Activated CD4-positive, alpha-beta memory T cell treated with anti-CD3 and anti-CD28 coated beads, Interleukin-2, amount 10 ng/mL, durations not matched to agents 7 days and 5 days (primary cell): ENCODE measurements at regions of chr10 and their contacts with region 1.

Region 1: GRCh38 chr10:43138021-43138756 is at the start of gene CSGALNACT2:
- DNase-seq: peak; percentile 92
- H3K4me3 Mint-ChIP-seq: peak within 1 kb of the TSS; percentile 94
- H3K27ac Mint-ChIP-seq: peak within 1 kb of the TSS; percentile 99
- H3K4me1 Mint-ChIP-seq: peaks cover 71% of the 10 kb centered on the region
- H3K27me3 Mint-ChIP-seq: no peaks in the 10 kb centered on the region
- total RNA-seq, gene CSGALNACT2: 64.8 to 66.2 TPM

Region 2: DNA sequence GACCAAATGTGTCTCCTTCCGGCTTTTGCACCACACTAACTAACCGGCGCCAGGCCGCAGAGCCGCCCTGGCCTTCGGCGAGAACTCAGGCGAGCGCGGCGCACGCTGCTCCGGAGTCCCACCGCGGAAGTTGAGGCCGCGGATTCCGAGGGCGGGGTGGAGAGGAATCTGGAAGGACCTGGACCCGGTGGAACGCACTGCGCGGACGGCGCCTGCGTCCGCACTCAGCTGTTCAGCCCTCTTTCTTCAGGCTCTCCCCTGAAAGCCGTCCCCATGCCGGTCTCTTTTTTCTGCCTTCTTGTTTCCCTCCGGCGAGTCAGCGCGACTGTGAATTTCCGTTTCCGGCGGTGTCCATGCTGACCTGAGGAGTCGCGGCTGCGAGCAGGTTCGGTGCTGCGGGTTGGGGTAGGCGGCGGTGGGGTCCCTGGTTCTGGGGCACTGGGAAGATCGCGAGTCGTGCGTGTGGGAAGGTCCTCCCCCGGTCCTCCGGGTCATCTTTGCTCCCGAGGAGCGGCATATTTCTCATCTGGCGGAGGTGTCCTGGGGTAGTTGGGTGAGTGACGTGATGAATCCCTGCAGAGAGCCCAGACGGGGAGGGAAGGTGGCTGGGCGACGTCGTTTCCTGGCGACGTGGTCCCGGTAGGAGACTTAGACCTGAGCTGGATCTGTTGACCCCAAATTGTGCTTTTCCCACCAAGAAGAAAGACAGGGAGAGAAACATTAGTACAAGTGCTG is 355.6 kb before region 1 on chr10 and contains the start of gene BMS1:
- CTCF ChIA-PET with region 1: no interaction called
- POLR2A ChIA-PET with region 1: interaction called, 20 read pairs
- DNase-seq: peak; percentile 91
- H3K4me3 Mint-ChIP-seq: peak within 1 kb of the TSS; percentile 88
- H3K27ac Mint-ChIP-seq: peak within 1 kb of the TSS; percentile 84
- H3K4me1 Mint-ChIP-seq: peaks cover 21% of the 10 kb centered on the region
- H3K27me3 Mint-ChIP-seq: peaks cover 3% of the 10 kb centered on the region
- total RNA-seq, gene BMS1: 14.3 to 14.6 TPM

Region 3: GRCh38 chr10:43120929-43121314 is 17.3 kb before region 1 on chr10:
- CTCF ChIA-PET with region 1: interaction called, 43 read pairs
- POLR2A ChIA-PET with region 1: interaction called, 415 read pairs
- DNase-seq: peak; percentile 87
- H3K4me3 Mint-ChIP-seq: peak overlapping the region; percentile 37
- H3K27ac Mint-ChIP-seq: peak overlapping the region; percentile 88
- H3K4me1 Mint-ChIP-seq: peaks cover 58% of the 10 kb centered on the region
- H3K27me3 Mint-ChIP-seq: no peaks in the 10 kb centered on the region

Region 4: DNA sequence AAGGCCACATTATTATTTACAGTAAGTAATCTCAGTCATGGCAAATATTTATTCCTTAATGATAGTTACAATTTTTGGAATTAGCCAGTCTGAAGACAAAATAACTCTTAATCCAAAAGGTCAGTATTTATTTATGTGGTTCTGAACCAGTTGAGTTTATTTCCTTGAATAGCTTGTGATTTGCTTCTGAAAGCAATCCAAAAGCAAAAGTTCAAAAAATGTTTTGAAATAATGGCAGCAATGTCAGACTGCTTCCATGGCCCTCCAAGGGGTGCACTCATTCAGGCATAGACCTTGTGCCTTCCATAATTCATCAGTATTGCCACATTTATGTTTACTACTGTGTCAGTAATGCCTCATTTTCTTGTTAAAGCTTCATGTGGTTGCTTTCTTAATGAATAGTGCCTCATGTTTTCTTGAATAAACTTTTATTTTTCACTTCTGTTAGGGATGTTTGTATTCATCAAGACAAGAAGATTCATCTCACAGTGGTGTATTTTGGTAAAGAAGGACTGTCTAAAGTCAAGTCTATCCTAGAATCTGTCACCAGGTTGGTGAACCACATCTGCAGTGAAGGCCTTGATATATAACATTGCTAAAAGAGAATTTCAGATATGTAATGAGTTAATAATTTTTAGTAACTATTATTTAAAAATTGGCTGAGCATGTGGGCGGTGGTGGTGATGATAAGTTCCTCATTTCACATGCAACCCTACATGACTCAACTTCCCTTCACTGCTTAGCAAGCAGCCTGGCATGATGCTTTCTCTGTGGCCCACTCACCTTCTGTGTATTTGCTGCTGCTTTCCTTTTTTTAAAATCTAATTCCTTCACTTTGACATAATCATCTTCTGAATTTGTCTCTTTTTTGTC is 22.1 kb after region 1 on chr10:
- CTCF ChIA-PET with region 1: interaction called, 3 read pairs
- POLR2A ChIA-PET with region 1: interaction called, 14 read pairs
- DNase-seq: no peak
- H3K4me3 Mint-ChIP-seq: no peak overlapping the region
- H3K27ac Mint-ChIP-seq: peak overlapping the region; percentile 49
- H3K4me1 Mint-ChIP-seq: peaks cover 65% of the 10 kb centered on the region
- H3K27me3 Mint-ChIP-seq: no peaks in the 10 kb centered on the region

Region 5: DNA sequence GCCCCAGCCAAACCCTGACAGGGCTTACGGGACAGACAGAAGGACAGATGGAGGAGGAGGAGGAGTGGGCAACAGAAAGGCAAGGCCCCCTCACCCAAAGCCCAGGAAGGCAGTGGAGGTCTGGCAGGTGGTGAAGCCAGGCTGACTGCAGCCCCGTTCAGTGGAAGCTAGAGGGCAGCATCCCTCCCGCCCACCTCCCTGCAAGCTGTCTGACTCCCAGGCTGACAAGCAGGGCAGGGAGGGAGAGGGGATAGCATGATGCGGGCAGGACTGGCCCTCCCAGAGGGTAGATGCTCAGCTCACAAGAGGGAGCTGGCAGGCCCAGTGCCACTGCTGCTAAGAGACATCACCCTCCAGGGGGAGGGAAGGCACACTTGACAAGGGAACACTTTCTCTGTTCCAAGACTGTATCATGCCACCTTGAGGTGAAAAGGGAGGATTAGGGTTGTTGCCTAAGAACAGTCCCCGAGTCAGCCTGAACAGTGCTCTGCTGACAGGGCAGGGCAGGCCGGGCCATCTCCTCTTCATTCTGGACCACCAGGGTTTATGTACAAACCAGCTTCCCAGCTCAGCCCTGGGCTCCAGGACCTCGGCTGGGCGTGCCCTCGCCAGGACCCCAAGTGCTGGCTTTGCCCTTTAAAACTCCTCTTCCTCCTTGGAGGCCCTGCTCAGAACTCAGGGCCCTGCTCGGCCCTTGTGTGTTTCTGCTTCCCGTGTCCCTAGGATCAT is 66.9 kb after region 1 on chr10:
- CTCF ChIA-PET with region 1: interaction called, 17 read pairs
- POLR2A ChIA-PET with region 1: interaction called, 13 read pairs
- DNase-seq: peak; percentile 73
- H3K4me3 Mint-ChIP-seq: no peak overlapping the region
- H3K27ac Mint-ChIP-seq: no peak overlapping the region
- H3K4me1 Mint-ChIP-seq: peaks cover 12% of the 10 kb centered on the region
- H3K27me3 Mint-ChIP-seq: no peaks in the 10 kb centered on the region

Region 6: DNA sequence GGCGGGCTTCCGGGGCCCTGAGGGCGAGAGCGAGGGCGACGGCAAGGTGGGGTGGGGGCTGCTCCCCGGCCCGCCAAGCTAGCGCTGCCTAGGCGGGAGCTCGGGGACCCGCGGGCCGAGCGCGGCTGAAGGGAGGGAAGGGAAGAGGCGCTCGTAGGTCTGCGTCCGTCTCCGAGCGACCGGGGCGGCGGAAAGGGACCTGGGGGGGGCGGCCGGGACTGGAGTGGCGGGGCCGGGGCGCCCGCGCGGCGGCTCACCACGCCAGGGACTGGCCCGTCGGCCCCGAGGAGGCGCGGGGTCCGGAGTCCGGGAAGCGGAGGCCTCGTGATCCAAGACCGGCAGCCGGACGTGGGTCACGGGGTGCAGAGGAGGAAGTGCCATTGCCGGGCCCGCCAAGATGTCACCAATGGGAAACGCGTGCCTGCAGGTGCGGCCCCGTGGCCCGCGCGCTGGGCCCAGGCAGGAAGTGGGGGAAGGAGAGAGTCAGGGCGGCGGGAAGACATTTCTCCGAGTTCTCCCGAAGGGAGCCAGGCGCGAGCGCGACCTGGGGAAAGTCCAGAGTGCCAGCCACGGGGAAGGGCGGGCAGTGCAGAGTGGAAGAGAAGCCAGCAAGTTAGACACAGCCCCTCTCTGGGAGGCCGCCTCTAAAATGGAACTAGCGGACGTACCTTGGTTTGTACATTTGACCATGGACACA is 258.9 kb after region 1 on chr10:
- CTCF ChIA-PET with region 1: no interaction called
- POLR2A ChIA-PET with region 1: interaction called, 51 read pairs
- DNase-seq: peak; percentile 89
- H3K4me3 Mint-ChIP-seq: peak overlapping the region; percentile 90
- H3K27ac Mint-ChIP-seq: peak overlapping the region; percentile 93
- H3K4me1 Mint-ChIP-seq: peaks cover 76% of the 10 kb centered on the region
- H3K27me3 Mint-ChIP-seq: no peaks in the 10 kb centered on the region

Region 7: DNA sequence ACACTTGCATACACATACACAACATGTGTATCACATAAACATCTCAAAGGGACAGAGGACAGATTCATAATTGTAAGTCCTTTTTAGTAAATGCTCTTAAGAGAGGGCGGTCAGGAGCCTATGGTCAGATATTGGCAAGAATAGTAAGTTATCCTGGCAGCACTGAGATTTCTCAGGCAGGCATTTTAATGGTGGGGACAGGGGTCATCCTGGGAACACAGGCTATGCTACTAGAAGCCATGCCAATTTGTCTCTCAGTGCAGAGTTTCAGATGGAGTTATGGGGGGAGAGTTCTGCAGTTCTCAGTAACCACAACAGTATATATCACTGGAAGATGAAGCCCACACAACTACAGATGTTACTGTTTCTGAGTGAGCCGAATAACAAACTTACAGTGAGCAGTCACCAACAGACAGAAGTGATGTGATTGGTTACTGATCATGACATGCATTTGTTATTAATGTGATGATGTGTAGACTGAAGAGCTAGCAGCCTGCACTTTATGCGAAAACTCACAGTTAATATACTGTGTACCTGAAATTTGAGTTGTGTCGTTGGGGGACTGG is 315.2 kb after region 1 on chr10:
- CTCF ChIA-PET with region 1: no interaction called
- POLR2A ChIA-PET with region 1: interaction called, 10 read pairs
- DNase-seq: no peak
- H3K4me3 Mint-ChIP-seq: peak overlapping the region; percentile 66
- H3K27ac Mint-ChIP-seq: peak overlapping the region; percentile 95
- H3K4me1 Mint-ChIP-seq: peaks cover 52% of the 10 kb centered on the region
- H3K27me3 Mint-ChIP-seq: no peaks in the 10 kb centered on the region